CD14-positive monocyte (primary cell): ENCODE measurements at regions of chr19 and their contacts with region 1.

Region 1: GRCh38 chr19:11924886-11925650 is at the start of gene ZNF700:
- DNase-seq: peak; percentile 81 to 86 (median 81)
- H3K4me3 ChIP-seq: peak within 1 kb of the TSS; percentile 83 to 97 (median 91)
- H3K4me3 Mint-ChIP-seq: peak within 1 kb of the TSS; percentile 95 to 96
- H3K27ac ChIP-seq: peak within 1 kb of the TSS; percentile 93 to 95
- H3K27ac Mint-ChIP-seq: peak within 1 kb of the TSS; percentile 91 to 99 (median 97)
- H3K4me1 ChIP-seq: peaks cover 26 to 37% of the 10 kb centered on the region in 2 donors
- H3K4me1 Mint-ChIP-seq: peaks cover 30% of the 10 kb centered on the region
- H3K27me3 ChIP-seq: no peaks in the 10 kb centered on the region
- H3K27me3 Mint-ChIP-seq: no peaks in the 10 kb centered on the region
- CTCF ChIP-seq: no peak
- polyA plus RNA-seq, gene ZNF700: 1.1 to 18.3 (median 1.2) TPM

Region 2: GRCh38 chr19:12064590-12065538 is 139.8 kb after region 1 on chr19 and contains the start of gene ZNF844:
- intact Hi-C with region 1: loop called in 1 of 2 experiments (anchors 10 kb)
- DNase-seq: peak; percentile 86 to 88 (median 86)
- H3K4me3 ChIP-seq: peak within 1 kb of the TSS; percentile 62 to 91 (median 63)
- H3K4me3 Mint-ChIP-seq: peak within 1 kb of the TSS; percentile 88 to 94
- H3K27ac ChIP-seq: peak within 1 kb of the TSS; percentile 54 to 90
- H3K27ac Mint-ChIP-seq: peak within 1 kb of the TSS; percentile 63 to 94 (median 89)
- H3K4me1 ChIP-seq: peaks cover 9 to 21% of the 10 kb centered on the region in 2 donors
- H3K4me1 Mint-ChIP-seq: peaks cover 14% of the 10 kb centered on the region
- H3K27me3 ChIP-seq: no peaks in the 10 kb centered on the region
- H3K27me3 Mint-ChIP-seq: peaks cover 0 to 6% (median 1%) of the 10 kb centered on the region in 3 donors
- CTCF ChIP-seq: no peak
- polyA plus RNA-seq, gene ZNF844: 1.9 to 2.2 (median 2.0) TPM

Region 3: GRCh38 chr19:12484371-12485051 is 559.4 kb after region 1 on chr19 and contains the start of gene ZNF709:
- intact Hi-C with region 1: no loop called
- DNase-seq: peak; percentile 72 to 80 (median 73)
- H3K4me3 ChIP-seq: peak within 1 kb of the TSS; percentile 75 to 98 (median 88)
- H3K4me3 Mint-ChIP-seq: peak within 1 kb of the TSS; percentile 87 to 94
- H3K27ac ChIP-seq: peak within 1 kb of the TSS in 1 of 2 donors; percentile 73
- H3K27ac Mint-ChIP-seq: peak within 1 kb of the TSS in 6 of 7 donors; percentile 33 to 81 (median 74)
- H3K4me1 ChIP-seq: peaks cover 12 to 21% of the 10 kb centered on the region in 2 donors
- H3K4me1 Mint-ChIP-seq: peaks cover 31% of the 10 kb centered on the region
- H3K27me3 ChIP-seq: no peaks in the 10 kb centered on the region
- H3K27me3 Mint-ChIP-seq: peaks cover 2 to 6% (median 5%) of the 10 kb centered on the region in 3 donors
- CTCF ChIP-seq: no peak
- polyA plus RNA-seq, gene ZNF709: 0.15 to 0.28 (median 0.19) TPM